Transverse colon (tissue), 4 donors: ENCODE measurements at regions of chr17 and their contacts with region 1.

Region 1: DNA sequence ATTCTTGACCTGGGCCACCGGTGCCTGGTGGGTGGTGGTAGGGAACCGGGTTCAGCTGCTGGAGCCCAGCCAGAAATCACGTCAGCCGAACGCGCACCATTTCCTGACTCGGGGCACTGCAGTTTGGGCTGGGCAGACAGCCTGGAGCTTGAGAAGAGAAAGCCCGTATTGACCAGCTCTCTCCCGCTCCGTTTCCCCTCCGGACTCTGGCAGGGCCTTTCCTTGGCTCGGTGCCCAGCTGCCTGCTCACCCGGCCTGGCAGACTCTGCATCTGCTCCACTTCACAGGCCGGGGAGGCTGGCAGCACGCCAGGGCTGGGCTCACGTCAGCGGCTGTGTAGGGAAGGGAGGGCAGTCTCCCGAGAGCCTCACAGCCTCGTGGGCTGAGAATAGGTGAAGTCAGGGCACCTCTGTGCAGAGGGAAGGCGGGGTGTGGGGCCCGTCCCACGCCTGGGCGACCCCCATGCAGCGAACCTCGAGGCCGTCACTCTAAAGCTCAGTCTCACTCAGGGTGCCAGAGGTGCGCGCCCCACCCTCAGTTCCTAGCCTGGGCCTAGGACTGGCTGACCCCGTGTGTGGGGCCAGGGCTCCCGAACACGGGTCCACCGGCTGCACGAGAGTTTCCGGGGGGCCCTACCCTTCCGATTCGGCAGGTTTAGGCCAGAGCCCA is 59.1 kb downstream of the OR1D5 start:
- DNase-seq: peak; percentile 99
- H3K4me3 ChIP-seq: peak overlapping the region in 1 of 4 donors; percentile 33
- H3K27ac ChIP-seq: peak overlapping the region; percentile 73 to 88 (median 83)
- H3K4me1 ChIP-seq: peaks cover 17 to 27% (median 22%) of the 10 kb centered on the region in 4 donors
- H3K27me3 ChIP-seq: no peaks in the 10 kb centered on the region
- CTCF ChIP-seq: no peak
- EP300 ChIP-seq: peak; percentile 80
- POLR2A ChIP-seq: no peak

Region 2: DNA sequence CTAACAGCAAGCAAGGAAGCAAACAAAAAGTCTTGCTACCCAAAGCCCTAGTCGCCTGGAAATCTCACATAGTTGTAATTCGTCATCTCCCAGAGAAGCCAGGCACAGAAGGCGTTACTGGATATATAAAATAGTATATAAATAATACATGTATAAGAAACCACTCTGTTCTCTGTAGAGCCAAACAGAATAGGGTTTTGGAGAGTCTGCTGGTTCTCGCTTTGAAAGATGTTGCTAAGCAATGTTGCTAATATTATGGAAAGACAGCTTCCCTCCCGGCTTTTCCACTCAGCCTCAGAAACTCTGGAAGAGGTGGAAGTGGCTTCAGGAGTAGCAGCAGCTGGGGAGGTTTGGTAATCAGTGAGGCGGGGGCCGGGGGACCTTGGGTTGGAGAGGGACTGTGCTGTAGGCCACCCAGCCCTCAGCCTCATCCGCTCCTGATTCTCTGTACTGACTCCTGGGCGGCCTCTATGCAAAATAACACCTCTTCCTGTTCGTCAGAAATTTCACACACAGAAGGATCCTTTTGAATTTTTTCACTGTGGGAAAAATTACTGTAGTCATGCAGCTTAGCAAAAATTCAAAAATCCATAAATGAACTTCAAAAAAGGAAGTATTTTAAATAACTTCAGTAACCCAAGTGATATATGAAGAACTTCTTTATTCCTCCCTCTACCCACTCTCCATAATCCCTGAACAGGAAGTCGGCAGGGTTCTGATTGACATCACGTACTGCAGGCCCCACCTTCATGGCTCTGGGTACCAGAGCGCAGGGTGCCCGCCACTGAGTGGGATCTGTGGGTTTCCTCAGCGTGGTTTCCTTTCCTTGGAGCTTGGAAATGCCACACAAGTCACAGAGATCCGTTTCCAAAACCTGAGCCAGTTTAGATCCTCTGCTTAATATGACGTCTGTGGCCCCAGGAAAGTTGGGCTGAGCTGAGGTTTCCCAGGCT is 156.6 kb before region 1 on chr17:
- in situ Hi-C with region 1: loop called in 2 of 4 experiments (anchors 25 kb)
- intact Hi-C with region 1: loop called (anchors 2 kb)
- DNase-seq: no peak
- H3K4me3 ChIP-seq: no peak overlapping the region
- H3K27ac ChIP-seq: peak overlapping the region in 2 of 4 donors; percentile 2 to 13
- H3K4me1 ChIP-seq: peaks cover 0 to 24% (median 5%) of the 10 kb centered on the region in 4 donors
- H3K27me3 ChIP-seq: no peaks in the 10 kb centered on the region
- CTCF ChIP-seq: no peak
- EP300 ChIP-seq: no peak
- POLR2A ChIP-seq: no peak

Region 3: GRCh38 chr17:2874189-2874686 is 130.0 kb before region 1 on chr17:
- in situ Hi-C with region 1: no loop called
- intact Hi-C with region 1: no loop called
- DNase-seq: no peak
- H3K4me3 ChIP-seq: no peak overlapping the region
- H3K27ac ChIP-seq: no peak overlapping the region
- H3K4me1 ChIP-seq: no peaks in the 10 kb centered on the region
- H3K27me3 ChIP-seq: no peaks in the 10 kb centered on the region
- CTCF ChIP-seq: no peak
- EP300 ChIP-seq: no peak
- POLR2A ChIP-seq: no peak

Region 4: GRCh38 chr17:2965563-2966235 is 38.6 kb before region 1 on chr17:
- in situ Hi-C with region 1: no loop called
- intact Hi-C with region 1: loop called (anchors 5 kb)
- DNase-seq: no peak
- H3K4me3 ChIP-seq: no peak overlapping the region
- H3K27ac ChIP-seq: peak overlapping the region in 3 of 4 donors; percentile 31 to 79 (median 68)
- H3K4me1 ChIP-seq: peaks cover under 1 to 9% (median 5%) of the 10 kb centered on the region in 4 donors
- H3K27me3 ChIP-seq: no peaks in the 10 kb centered on the region
- CTCF ChIP-seq: no peak
- EP300 ChIP-seq: no peak
- POLR2A ChIP-seq: no peak